ENCODE measurements at regions of chr10 and their contacts with region 1.

Region 1: DNA sequence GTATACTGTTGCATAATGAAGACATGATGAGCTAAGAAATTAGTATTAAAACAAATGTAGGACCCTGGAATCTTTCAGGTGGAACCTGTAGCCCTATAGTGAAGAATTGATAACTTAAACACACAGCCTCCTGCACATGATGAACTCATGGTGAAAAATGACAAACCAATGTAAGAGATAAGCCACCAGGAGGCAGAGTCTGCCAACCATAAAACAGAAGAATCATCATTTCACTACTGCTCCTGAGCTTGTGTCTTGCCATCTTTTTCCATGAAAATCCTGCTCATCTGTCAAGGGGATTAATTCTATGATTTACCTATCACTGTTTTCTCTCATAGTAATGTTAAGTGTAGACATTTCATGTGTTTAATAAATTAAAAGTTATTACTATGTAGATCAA is 363.9 kb downstream of the MALRD1 start:
- H3K4me3 Mint-ChIP-seq: no peak overlapping the region
- H3K27ac Mint-ChIP-seq: no peak overlapping the region
- H3K4me1 Mint-ChIP-seq: no peaks in the 10 kb centered on the region
- H3K27me3 Mint-ChIP-seq: no peaks in the 10 kb centered on the region

Region 2: GRCh38 chr10:20852303-20852702 is 1439.8 kb after region 1 on chr10:
- intact Hi-C with region 1: loop called (anchors 5 kb)
- H3K4me3 Mint-ChIP-seq: no peak overlapping the region
- H3K27ac Mint-ChIP-seq: no peak overlapping the region
- H3K4me1 Mint-ChIP-seq: no peaks in the 10 kb centered on the region
- H3K27me3 Mint-ChIP-seq: no peaks in the 10 kb centered on the region

Measured in dendritic cell treated with granulocyte-macrophage colony-stimulating factor and Interleukin-4, amounts not matched to agents 40 ng/mL and 50 ng/mL, for 4 days (primary cell).